ENCODE measurements at regions of chr13 and their contacts with region 1.

Region 1: DNA sequence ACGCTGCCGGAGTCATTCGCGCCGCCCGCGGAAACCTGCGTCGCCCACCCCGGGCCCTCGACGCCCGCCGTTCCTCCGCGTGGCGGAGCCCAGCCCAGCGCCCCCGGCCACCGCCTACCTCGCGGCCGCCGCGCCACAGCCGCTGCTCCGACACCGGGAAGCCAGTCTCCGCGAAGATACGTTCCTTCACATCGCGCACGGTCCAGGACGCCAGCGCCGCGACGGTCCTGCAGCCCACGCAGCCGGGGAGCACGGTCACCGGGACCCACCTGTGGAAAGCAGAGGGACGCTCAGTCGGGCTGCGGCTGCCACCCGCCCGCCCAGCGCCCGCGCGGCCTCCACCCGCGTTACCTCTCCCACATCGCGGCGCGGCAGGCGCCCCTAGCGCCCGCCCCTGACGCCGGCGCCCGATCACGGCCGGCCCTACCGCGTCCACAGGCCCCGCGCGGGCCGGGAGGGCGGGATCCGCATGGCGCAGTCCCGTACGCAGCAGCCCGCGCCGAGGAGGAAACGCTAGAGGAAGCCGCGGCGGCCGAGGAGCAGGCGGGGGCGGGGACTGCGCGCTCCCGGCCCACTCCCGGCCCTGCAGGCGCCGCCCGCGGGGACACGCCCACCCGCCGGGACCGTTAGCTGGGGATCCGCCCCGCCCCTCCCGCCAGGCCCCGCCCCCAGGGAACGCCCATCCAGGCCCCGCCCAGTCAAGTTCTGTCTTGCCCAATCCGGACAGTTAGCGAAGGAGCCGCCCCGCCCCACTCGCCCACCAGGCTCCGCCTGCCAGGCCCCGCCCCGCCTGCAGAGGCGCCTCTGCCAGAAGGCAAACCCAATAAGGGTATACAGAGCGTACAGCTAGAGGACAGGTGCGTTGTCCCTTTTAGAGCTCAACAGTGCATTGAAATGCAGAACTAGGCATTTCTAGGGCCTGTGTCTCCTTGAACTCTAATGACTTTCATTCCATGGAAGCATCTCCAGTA is 58.2 kb downstream of the SACS start:
- DNase-seq: peak; percentile 97
- H3K4me3 ChIP-seq: peak overlapping the region; percentile 74 to 99 (median 94)
- H3K27ac ChIP-seq: peak overlapping the region; percentile 68
- H3K4me1 ChIP-seq: peaks cover 68% of the 10 kb centered on the region
- H3K27me3 ChIP-seq: no peaks in the 10 kb centered on the region
- CTCF ChIP-seq: peak; percentile 7 to 10
- POLR2A ChIP-seq: peak; percentile 72

Region 2: DNA sequence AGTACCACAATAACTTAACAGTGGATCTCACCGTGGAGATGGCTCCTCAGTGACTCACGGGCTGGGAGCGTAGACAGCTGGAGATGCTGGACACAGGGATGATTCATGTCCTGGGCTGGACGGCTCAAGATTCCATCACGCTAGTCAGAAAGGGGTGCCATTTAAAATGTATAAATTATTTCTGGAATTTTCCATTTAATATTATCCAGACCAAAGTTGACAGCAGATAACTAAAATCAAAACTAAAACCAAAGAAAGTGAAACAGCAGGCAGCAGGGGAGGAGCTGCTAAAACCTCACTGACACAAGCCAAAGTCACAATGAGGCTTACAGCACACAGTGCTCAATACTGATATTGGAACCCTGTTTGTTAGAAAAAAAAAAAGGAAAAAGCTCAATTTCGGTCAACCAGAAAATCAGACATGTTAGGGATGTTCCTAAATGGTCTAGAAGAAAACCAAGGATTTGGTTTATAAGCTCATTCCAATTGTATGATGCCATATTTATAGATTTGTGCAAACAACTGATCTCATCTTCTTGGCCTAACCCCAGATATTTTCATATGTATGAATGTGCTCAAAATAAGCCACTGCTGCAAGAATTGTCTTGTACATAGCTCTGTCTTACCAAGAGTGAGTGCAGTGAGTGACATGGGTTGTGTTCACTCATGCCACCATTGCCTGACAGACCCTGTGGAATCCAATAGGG is 53.6 kb before region 1 on chr13:
- CTCF ChIA-PET with region 1: interaction called, 3 read pairs
- POLR2A ChIA-PET with region 1: no interaction called
- dilution Hi-C with region 1: no loop called
- intact Hi-C with region 1: loop called (anchors 2 kb)
- DNase-seq: peak; percentile 92
- H3K4me3 ChIP-seq: peak overlapping the region in 1 of 3 experiments; percentile 30
- H3K27ac ChIP-seq: peak overlapping the region; percentile 98
- H3K4me1 ChIP-seq: peaks cover 41% of the 10 kb centered on the region
- H3K27me3 ChIP-seq: no peaks in the 10 kb centered on the region
- CTCF ChIP-seq: no peak
- POLR2A ChIP-seq: no peak

Region 3: DNA sequence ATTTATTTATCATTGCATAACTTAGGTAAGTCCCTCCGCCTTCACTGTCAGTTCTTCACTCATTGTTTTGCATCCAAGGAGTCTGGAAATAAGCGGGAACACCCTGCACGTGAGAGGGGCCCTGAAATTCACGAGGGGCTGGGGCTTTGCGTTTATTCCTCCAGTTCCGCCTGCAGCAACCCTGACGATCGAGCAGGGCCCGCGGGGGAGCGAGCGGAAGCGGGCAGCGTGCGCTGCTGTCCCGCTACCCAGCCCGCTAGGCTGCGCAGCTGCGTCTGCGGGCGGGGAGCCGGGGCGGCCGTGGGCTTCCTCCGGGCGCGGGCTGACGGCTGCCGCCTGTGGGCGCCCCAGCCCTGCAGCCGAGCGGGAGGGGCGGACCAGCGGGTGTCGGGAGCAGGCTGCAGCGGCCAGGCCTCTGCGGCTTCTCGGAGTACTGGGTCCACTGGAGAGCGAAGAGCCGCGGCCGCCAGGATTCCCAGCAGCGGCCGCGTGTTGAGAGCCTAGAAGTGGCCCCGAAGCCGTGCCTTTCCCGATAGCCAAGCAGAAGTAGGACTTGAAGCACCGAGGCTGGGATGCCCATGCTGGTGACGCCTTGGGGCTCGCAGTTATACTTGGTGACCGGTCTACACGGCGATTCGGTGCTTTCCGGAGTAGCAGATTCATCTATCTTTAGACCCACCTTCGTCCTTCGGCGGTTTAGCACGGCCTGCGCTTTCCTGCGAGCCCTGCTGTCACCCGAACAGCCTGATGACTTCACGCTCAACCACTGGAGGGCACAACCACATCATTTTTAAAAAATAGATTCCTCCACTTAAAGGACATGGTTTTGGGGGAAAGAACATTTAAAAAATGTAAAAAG is 91.1 kb after region 1 on chr13:
- CTCF ChIA-PET with region 1: interaction called, 4 read pairs
- POLR2A ChIA-PET with region 1: no interaction called
- dilution Hi-C with region 1: no loop called
- intact Hi-C with region 1: loop called (anchors 2 kb)
- DNase-seq: peak; percentile 77
- H3K4me3 ChIP-seq: peak overlapping the region; percentile 5 to 57 (median 40)
- H3K27ac ChIP-seq: no peak overlapping the region
- H3K4me1 ChIP-seq: peaks cover 7% of the 10 kb centered on the region
- H3K27me3 ChIP-seq: peaks cover 6 to 13% of the 10 kb centered on the region in 2 experiments
- CTCF ChIP-seq: peak; percentile 46 to 48
- POLR2A ChIP-seq: no peak

Region 4: DNA sequence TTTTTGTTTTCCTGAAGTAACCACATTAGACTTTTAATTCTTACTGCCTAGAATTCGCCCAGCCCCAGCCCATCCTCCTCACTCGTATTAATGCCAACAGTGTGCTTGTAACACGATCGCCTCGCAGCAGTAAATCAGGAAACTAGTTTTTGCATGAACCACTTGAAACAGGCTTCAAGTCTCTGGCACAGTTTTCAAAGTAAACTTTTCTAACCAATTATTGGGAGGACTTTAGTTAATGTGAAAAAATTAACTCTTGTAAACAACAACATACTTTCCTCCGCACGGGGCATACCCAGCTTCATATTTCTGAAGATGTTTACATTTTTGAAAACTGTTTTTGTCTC is 234.1 kb after region 1 on chr13:
- CTCF ChIA-PET with region 1: no interaction called
- POLR2A ChIA-PET with region 1: no interaction called
- dilution Hi-C with region 1: no loop called
- intact Hi-C with region 1: loop called (anchors 5 kb)
- DNase-seq: peak; percentile 67
- H3K4me3 ChIP-seq: peak overlapping the region in 1 of 3 experiments; percentile 9
- H3K27ac ChIP-seq: peak overlapping the region; percentile 69
- H3K4me1 ChIP-seq: peaks cover 27% of the 10 kb centered on the region
- H3K27me3 ChIP-seq: peaks cover 2 to 3% of the 10 kb centered on the region in 2 experiments
- CTCF ChIP-seq: no peak
- POLR2A ChIP-seq: no peak

Region 5: GRCh38 chr13:23888658-23889614 is 513.6 kb after region 1 on chr13 and contains the start of gene MIPEP:
- CTCF ChIA-PET with region 1: no interaction called
- POLR2A ChIA-PET with region 1: no interaction called
- dilution Hi-C with region 1: no loop called
- intact Hi-C with region 1: loop called (anchors 2 kb)
- DNase-seq: peak; percentile 97
- H3K4me3 ChIP-seq: peak within 1 kb of the TSS; percentile 61 to 69 (median 61)
- H3K27ac ChIP-seq: peak within 1 kb of the TSS; percentile 50
- H3K4me1 ChIP-seq: peaks cover 10% of the 10 kb centered on the region
- H3K27me3 ChIP-seq: no peaks in the 10 kb centered on the region
- CTCF ChIP-seq: peak; percentile 78 to 84
- POLR2A ChIP-seq: no peak
- total RNA-seq, gene MIPEP: 16.2 and 19.2 TPM in 2 replicates

Measured in endothelial cell of umbilical vein (primary cell).